ENCODE measurements at regions of chr13 and their contacts with region 1.

Region 1: DNA sequence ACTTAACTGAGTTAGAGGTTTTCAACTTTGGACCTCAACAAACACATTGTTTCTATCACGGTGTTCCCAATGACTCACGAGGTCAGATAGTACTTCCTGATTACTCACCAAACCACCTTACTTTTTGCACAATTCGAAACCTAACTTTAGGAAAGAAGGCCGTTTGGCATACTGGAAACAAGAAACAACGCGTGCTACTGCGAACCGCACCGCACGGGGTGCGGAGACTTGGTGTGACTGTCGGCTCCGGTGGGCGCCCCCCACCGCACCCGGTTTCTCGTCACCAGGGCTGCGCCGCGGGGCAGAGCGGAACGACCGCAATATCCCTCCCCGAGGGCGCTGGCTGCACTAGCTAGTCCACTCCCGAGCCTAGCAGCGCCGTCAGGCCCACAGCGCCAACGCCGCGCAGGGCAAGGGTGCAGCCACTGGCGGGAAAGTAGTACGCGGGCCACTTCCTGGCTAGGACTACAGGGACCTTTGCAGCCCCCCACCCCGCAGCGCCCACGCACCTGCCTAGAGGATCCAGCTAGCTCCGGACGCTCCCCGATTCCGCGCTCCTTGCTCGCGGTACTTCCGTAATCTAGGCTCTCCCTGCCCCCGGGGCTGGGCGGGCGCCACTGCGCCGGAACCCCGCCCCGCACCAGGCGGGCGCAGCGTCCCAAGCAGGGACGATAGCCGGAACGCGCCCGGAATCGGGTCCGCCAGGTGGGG is at the start of gene PARP4:
- DNase-seq: peak; percentile 66
- H3K4me3 Mint-ChIP-seq: peak within 1 kb of the TSS; percentile 87
- H3K27ac Mint-ChIP-seq: peak within 1 kb of the TSS; percentile 98
- H3K4me1 Mint-ChIP-seq: peaks cover 50% of the 10 kb centered on the region
- H3K27me3 Mint-ChIP-seq: peaks cover 2% of the 10 kb centered on the region
- total RNA-seq, gene PARP4: 41.3 and 41.9 TPM in 2 replicates

Region 2: GRCh38 chr13:23384111-23384510 is 1128.2 kb before region 1 on chr13:
- intact Hi-C with region 1: loop called (anchors 2 kb)
- DNase-seq: no peak
- H3K4me3 Mint-ChIP-seq: no peak overlapping the region
- H3K27ac Mint-ChIP-seq: no peak overlapping the region
- H3K4me1 Mint-ChIP-seq: peaks cover 41% of the 10 kb centered on the region
- H3K27me3 Mint-ChIP-seq: peaks cover 8% of the 10 kb centered on the region

Region 3: DNA sequence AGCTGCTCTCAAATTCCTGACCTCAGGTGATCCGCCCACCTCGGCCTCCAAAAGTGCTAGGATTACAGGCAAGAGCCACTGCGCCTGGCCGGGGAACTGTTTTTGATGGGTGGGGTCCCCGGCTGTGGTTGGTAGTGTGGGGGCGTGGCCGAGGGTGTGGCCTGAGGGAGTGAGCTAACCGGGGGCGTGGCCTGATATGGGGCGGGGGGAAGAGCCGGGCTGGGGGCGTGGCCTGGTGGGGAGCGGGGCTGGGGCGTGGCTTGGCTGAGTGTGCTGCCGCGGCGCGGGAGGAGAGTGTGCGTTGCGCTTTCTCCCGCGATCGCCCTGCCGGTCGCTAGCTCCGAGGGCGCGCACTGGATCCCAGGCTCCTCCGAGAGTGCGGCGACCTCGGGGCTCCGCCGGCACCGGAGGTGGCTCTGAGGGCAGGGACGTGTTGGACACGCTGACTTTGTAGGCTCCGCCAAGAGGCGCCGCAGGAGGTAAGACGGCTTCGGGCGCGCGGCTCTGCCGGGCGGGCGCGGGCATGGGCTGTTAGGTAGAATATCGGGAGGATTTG is 351.8 kb before region 1 on chr13 and contains the start of gene SPATA13:
- intact Hi-C with region 1: loop called (anchors 5 kb)
- DNase-seq: peak; percentile 86
- H3K4me3 Mint-ChIP-seq: peak within 1 kb of the TSS; percentile 92
- H3K27ac Mint-ChIP-seq: peak within 1 kb of the TSS; percentile 76
- H3K4me1 Mint-ChIP-seq: peaks cover 26% of the 10 kb centered on the region
- H3K27me3 Mint-ChIP-seq: peaks cover 7% of the 10 kb centered on the region
- total RNA-seq, gene SPATA13: 56.2 and 56.3 TPM in 2 replicates

Region 4: GRCh38 chr13:24270639-24271141 is 241.7 kb before region 1 on chr13:
- intact Hi-C with region 1: loop called (anchors 1 kb)
- DNase-seq: peak; percentile 54
- H3K4me3 Mint-ChIP-seq: peak overlapping the region; percentile 88
- H3K27ac Mint-ChIP-seq: peak overlapping the region; percentile 93
- H3K4me1 Mint-ChIP-seq: peaks cover 82% of the 10 kb centered on the region
- H3K27me3 Mint-ChIP-seq: no peaks in the 10 kb centered on the region

Region 5: GRCh38 chr13:24574847-24575246 is 62.5 kb after region 1 on chr13:
- intact Hi-C with region 1: loop called (anchors 1 kb)
- DNase-seq: no peak
- H3K4me3 Mint-ChIP-seq: no peak overlapping the region
- H3K27ac Mint-ChIP-seq: no peak overlapping the region
- H3K4me1 Mint-ChIP-seq: no peaks in the 10 kb centered on the region
- H3K27me3 Mint-ChIP-seq: peaks cover 14% of the 10 kb centered on the region

Region 6: DNA sequence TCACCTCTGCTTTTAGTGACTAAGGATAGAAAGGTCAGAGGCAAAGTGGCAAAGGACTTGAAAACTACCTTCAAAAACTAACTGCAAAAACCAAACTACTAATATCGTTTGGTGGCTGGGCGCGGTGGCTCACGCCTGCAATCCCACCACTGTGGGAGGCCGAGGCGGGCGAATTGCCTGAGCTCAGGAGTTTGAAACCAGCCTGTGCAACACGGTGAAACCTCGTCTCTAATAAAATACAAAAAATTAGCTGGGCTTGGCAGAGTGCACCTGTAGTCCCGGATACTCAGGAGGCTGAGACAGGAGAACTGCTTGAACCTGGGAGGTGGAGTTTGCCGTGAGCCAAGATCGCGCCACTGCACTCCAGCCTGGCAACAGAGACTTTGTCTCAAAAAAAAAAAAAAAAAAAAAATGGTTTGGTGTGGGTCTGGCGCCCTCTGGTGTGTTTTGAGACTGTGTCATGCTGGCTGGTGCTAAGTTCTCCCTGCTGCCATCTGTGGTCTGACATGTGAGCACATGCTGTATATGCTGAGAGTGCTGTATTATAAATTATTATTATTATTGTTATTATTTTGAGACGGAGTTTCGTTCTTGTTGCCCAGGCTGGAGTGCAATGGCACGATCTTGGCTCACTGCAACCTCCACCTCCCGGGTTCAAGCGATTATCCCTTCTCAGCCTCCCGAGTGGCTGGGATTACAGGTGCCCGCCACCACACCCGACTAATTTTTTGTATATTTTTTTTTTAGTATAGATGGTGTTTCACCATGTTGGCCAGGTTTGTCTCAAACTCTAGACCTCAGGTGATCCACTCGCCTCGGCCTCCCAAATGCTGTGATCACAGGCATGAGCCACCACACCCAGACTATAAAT is 215.6 kb after region 1 on chr13:
- intact Hi-C with region 1: loop called (anchors 2 kb)
- DNase-seq: peak; percentile 60
- H3K4me3 Mint-ChIP-seq: no peak overlapping the region
- H3K27ac Mint-ChIP-seq: no peak overlapping the region
- H3K4me1 Mint-ChIP-seq: no peaks in the 10 kb centered on the region
- H3K27me3 Mint-ChIP-seq: peaks cover 19% of the 10 kb centered on the region

Region 7: GRCh38 chr13:25037057-25037813 is 524.9 kb after region 1 on chr13:
- intact Hi-C with region 1: no loop called
- DNase-seq: peak; percentile 30
- H3K4me3 Mint-ChIP-seq: no peak overlapping the region
- H3K27ac Mint-ChIP-seq: no peak overlapping the region
- H3K4me1 Mint-ChIP-seq: peaks cover 4% of the 10 kb centered on the region
- H3K27me3 Mint-ChIP-seq: peaks cover 19% of the 10 kb centered on the region

Region 8: GRCh38 chr13:25286969-25287961 is 774.9 kb after region 1 on chr13 and contains the start of gene MTMR6:
- intact Hi-C with region 1: loop called (anchors 5 kb)
- DNase-seq: peak; percentile 90
- H3K4me3 Mint-ChIP-seq: peak within 1 kb of the TSS; percentile 94
- H3K27ac Mint-ChIP-seq: peak within 1 kb of the TSS; percentile 93
- H3K4me1 Mint-ChIP-seq: peaks cover 41% of the 10 kb centered on the region
- H3K27me3 Mint-ChIP-seq: peaks cover 21% of the 10 kb centered on the region
- total RNA-seq, gene MTMR6: 17.0 and 17.9 TPM in 2 replicates